Activated B cell treated with CpG ODN at 0.5 μM for 24 hours (primary cell): ENCODE measurements at regions of chr5 and their contacts with region 1.

Region 1: GRCh38 chr5:65102828-65103711 is 334.3 kb downstream of the CWC27 start:
- DNase-seq: peak; percentile 57
- ATAC-seq: peak; percentile 89
- H3K4me3 Mint-ChIP-seq: peak overlapping the region; percentile 88
- H3K27ac Mint-ChIP-seq: peak overlapping the region; percentile 91
- H3K4me1 Mint-ChIP-seq: peaks cover 27% of the 10 kb centered on the region
- H3K27me3 Mint-ChIP-seq: no peaks in the 10 kb centered on the region
- CTCF ChIP-seq: no peak

Region 2: DNA sequence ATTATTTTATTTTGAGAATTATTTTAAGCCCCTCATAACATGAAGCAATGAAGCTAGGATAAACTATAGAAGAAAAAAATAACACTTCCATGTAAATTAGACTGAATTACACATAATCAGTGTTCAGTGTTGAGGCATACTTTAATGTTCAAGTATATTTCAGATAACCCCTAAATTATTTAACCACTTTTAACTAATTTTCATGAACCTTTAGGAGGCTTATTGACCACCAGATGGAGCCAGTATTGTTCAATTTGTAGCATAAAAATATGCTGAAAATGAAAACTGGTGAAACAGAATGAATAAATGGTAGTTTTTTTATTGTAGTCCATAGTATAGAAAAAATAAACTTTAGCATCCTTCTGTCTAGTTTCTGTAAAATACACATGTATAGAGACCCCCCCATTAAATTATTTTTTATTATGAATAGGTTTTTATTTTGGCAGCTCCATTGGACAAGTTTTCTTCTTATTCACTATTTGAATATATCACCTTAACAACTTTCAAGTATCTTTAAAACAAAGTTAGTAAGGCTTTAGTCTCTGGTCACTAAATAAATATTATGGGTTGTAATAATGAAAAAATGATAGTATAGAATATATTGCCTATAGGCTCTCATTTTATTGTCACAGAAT is 144.2 kb before region 1 on chr5:
- CTCF ChIA-PET with region 1: interaction called, 10 read pairs
- POLR2A ChIA-PET with region 1: no interaction called
- intact Hi-C with region 1: loop called (anchors 2 kb)
- DNase-seq: no peak
- ATAC-seq: no peak
- H3K4me3 Mint-ChIP-seq: no peak overlapping the region
- H3K27ac Mint-ChIP-seq: no peak overlapping the region
- H3K4me1 Mint-ChIP-seq: no peaks in the 10 kb centered on the region
- H3K27me3 Mint-ChIP-seq: no peaks in the 10 kb centered on the region
- CTCF ChIP-seq: no peak

Region 3: DNA sequence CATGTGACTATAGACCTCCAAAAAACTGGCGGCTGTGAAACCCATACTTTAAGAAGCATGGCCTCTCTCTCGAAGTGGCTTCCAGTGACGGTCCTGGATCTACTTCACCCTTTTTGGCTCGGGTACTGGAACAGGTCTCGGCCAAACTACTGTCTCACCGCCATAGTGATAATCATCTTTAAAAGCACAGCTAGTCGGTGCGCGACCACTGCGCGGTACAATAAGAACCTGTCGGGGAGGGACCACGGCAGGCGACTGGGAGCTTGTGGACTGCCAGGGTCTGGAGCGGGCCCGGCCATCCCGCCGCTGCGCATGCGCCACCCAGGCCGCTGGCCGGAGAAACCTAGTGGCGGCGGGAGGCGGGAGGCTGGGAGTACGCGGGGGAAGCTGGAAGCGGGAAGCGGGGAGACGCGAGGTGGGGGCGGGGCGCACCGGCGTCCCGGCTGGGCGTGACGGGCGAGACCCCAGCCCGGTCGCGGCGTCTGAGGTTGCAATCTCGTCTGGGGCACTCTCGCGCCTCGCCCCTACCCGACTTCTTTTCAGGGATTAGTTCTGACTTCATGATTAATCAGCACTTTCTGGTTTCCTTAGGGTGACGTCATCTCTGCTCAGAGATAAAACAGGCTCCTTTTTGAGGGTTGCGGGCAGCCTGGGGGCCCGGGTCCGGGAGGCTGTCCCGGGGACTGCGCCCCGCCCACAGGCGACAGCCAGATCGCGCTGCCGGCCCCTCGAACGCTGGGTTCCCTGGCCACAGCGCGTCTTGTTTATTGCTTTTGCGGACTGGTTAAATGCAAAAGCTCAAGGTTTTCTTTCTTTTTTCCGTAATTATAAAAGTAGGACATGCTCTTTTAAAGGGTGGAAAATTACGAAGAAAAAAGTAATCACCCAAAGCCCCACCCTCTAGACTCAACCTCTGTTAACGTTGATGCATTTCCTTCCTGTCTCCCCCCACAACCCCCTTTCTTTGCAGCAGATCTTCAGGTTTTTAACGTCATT is 67.6 kb before region 1 on chr5:
- CTCF ChIA-PET with region 1: interaction called, 3 read pairs
- POLR2A ChIA-PET with region 1: interaction called, 11 read pairs
- intact Hi-C with region 1: loop called (anchors 1 kb)
- DNase-seq: peak; percentile 70
- ATAC-seq: peak; percentile 80
- H3K4me3 Mint-ChIP-seq: peak overlapping the region; percentile 83
- H3K27ac Mint-ChIP-seq: peak overlapping the region; percentile 77
- H3K4me1 Mint-ChIP-seq: peaks cover 32% of the 10 kb centered on the region
- H3K27me3 Mint-ChIP-seq: no peaks in the 10 kb centered on the region
- CTCF ChIP-seq: no peak

Region 4: DNA sequence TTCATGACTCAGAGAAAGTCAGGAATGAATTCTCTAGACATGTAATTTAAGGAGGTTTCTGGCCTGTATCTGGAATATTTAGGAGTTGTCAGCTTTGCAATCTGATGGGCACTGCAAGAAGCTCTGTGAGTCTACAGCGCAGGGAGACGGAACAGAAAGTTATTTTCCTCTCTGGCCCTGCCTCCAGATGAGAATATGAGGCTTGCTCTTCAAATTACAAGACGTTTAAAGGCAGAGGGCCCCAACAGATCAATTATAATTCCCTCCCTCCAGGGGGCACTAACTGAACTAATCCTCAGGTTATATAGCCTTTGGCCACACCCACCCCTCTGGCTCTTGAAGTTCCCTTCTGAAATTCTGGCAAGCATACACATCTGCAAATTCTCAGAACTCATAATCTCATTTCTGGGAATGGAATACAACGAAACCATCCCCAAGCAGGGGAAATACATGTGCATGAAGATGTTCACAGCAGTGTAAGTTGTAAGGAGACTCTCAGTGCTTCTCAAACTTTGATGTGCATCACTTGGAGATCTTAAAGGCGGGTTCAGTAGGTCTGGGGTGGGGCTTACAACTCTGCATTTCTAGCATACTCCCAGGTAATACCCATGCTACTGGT is 26.7 kb before region 1 on chr5:
- CTCF ChIA-PET with region 1: interaction called, 3 read pairs
- POLR2A ChIA-PET with region 1: no interaction called
- intact Hi-C with region 1: loop called (anchors 1 kb)
- DNase-seq: no peak
- ATAC-seq: peak; percentile 94
- H3K4me3 Mint-ChIP-seq: no peak overlapping the region
- H3K27ac Mint-ChIP-seq: no peak overlapping the region
- H3K4me1 Mint-ChIP-seq: peaks cover 21% of the 10 kb centered on the region
- H3K27me3 Mint-ChIP-seq: peaks cover 1% of the 10 kb centered on the region
- CTCF ChIP-seq: no peak

Region 5: DNA sequence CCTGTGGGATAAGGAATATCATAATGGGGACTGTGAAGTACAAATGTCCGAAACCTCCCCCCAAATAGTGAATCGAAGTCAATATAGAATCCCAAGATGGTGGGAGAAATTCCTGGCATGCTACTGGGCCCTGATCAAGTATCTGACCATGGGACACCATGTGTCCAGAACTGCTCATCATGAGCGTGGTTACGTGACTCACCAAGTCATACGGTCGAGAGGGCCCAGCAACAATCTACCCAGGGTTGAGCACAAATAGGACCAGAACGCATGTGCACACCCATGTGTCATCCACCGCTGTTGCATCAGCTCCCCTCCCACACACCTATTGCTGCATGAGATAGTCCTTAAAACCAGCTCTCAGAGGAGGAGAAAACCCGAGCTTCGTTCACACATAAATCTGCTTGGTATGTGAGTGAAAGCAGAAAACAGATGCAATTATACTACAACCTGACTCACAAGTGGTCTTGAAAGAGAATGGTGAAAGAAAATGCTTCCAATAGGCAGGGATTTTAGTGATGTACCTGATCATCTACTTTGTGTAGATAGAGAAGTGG is 18.9 kb after region 1 on chr5:
- CTCF ChIA-PET with region 1: no interaction called
- POLR2A ChIA-PET with region 1: no interaction called
- intact Hi-C with region 1: no loop called
- DNase-seq: no peak
- ATAC-seq: no peak
- H3K4me3 Mint-ChIP-seq: no peak overlapping the region
- H3K27ac Mint-ChIP-seq: no peak overlapping the region
- H3K4me1 Mint-ChIP-seq: no peaks in the 10 kb centered on the region
- H3K27me3 Mint-ChIP-seq: no peaks in the 10 kb centered on the region
- CTCF ChIP-seq: no peak

Region 6: DNA sequence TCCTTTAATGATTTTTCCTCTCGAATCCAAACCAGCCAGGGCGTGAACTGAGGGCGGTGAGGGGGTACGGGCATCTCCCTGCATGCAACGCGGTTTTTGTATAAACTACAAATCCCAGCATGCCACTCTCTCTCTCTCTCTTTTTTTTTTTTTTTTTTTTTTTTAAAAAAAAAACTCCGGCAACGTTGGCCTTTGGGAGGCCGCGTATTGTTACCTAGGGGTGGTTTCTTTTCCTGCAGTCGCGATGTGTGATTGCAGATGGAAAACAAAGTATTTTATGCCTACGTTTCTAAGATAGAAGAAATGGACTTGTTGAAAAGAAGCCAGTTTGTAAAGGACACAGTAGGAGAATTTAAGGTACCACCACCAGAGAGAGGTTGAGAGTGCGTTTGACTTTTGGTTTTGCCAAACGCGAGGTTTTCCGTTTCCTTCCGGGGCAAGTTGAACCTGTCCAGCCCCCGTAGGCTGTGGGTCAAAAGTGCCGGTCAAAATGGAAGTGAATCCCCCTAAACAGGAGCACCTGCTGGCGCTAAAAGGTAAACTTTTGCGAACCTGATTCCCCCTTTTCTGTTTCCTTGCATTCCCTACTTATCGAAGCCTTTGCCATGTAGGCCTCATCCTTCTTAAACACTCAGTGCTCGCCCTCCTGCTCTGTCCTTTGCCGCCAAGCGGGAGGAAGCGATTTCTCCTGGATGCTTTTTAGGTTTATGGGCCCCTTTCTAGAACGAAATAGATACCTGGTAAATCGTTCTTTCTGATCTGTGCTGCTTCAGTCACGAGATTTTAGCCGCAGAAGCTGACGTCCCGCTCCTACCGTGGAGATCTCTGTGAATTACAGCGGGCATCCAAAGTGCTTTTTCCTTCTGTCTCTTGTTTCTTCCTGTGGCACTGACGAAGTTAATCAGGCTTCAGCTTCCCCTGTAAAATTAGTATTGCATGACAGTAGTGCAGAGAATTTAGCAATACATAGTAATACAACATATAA is 521.8 kb after region 1 on chr5 and contains the starts of genes SHLD3 and TRAPPC13:
- CTCF ChIA-PET with region 1: no interaction called
- POLR2A ChIA-PET with region 1: no interaction called
- intact Hi-C with region 1: loop called (anchors 10 kb)
- DNase-seq: peak; percentile 58
- ATAC-seq: peak; percentile 74
- H3K4me3 Mint-ChIP-seq: peak within 1 kb of the TSS; percentile 99
- H3K27ac Mint-ChIP-seq: peak within 1 kb of the TSS; percentile 98
- H3K4me1 Mint-ChIP-seq: peaks cover 43% of the 10 kb centered on the region
- H3K27me3 Mint-ChIP-seq: no peaks in the 10 kb centered on the region
- CTCF ChIP-seq: no peak
- total RNA-seq, gene SHLD3: 5.7 and 6.2 TPM in 2 replicates
- total RNA-seq, gene TRAPPC13: 19.3 and 29.0 TPM in 2 replicates